ENCODE measurements at regions of chr18 and their contacts with region 1.

Region 1: DNA sequence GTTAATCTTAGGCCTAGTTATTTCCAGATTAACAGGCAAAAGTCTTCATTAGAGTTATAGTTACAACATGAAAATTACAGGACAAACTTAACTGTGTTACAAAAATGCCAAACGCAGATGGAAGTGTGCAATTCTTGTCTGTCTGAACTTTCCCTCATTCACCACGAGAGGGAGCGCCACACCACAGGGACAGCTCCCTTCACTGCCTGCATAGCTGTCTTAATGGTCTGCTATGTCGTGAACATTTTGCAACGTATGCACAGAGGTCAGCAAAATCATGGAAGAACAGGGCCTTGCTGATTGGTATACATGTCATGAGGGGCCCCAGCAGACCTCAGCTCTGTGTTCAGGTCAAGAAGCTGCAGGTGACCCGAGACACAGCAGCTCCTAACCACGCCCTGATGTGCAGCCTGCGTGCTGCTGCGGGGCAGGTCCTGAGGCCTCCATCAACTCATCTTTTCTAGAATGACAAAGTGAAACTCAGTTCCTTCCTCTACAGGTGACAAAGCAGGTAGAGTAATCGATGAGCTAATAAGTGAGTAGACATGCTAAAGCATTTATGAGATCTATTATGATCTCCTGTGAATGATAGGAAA is 78.8 kb upstream of the ATP8B1 start:
- DNase-seq: peak; percentile 66

Region 2: DNA sequence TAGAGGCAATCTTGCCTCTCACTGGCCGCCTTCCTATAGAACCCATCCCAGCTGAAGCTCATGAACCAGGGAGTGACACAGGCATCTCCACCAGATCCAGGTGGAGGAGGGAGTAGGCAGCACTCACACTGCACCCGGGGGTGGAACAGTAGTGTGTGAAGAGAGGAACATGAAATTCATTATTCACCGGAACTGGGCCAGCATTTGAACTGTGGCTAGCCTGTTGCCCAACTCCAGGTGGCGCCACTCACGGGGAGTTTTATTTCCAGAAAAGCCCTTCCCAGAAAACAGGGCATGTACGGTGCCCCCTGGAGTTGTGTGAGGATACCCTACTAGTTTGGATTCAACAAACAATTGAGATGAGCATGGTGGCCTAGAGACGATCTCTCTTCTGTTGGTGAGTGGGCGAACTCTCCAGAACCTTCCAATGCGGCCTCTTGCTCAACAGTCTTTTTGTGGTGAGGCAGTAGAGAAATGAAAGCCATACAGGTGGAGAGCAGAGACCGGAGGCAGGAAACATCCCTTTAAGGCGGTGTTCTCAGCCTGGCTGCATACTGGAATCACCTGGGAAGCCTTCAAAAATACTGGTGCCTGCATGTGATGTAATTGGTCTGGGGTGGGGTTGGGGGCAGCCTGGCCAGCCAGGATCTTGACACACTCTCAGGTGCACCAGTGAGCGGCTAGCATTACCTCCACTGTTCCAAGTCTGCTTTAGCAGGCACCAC is 88.6 kb after region 1 on chr18:
- in situ Hi-C with region 1: no loop called
- DNase-seq: no peak

Region 3: GRCh38 chr18:58117786-58118403 is 236.0 kb after region 1 on chr18:
- in situ Hi-C with region 1: loop called (anchors 25 kb)
- DNase-seq: no peak

Measured in KBM-7 (cell line).